PC-9 (cell line): ENCODE measurements at regions of chr9 and their contacts with region 1.

Region 1: GRCh38 chr9:112921549-112921948 is 30.9 kb upstream of the SLC46A2 start:
- DNase-seq: peak in 1 of 2 experiments; percentile 50
- H3K4me3 ChIP-seq: no peak overlapping the region
- H3K27ac ChIP-seq: no peak overlapping the region
- H3K4me1 ChIP-seq: peaks cover 28% of the 10 kb centered on the region
- H3K27me3 ChIP-seq: no peaks in the 10 kb centered on the region
- CTCF ChIP-seq: peak; percentile 57; the same call in 1 of the 2 replicates

Region 2: GRCh38 chr9:113187935-113188595 is 266.5 kb after region 1 on chr9:
- CTCF ChIA-PET with region 1: no interaction called
- POLR2A ChIA-PET with region 1: no interaction called
- intact Hi-C with region 1: loop called (anchors 1 kb)
- DNase-seq: peak; percentile 60 to 66
- H3K4me3 ChIP-seq: no peak overlapping the region; the same call in 1 of the 2 replicates
- H3K27ac ChIP-seq: peak overlapping the region; percentile 73
- H3K4me1 ChIP-seq: peaks cover 16% of the 10 kb centered on the region
- H3K27me3 ChIP-seq: no peaks in the 10 kb centered on the region
- CTCF ChIP-seq: no peak